CD4-positive, alpha-beta T cell (primary cell): ENCODE measurements at regions of chr9 and their contacts with region 1.

Region 1: GRCh38 chr9:94672811-94673487 is 33.6 kb upstream of the FBP1 start:
- DNase-seq: no peak
- ATAC-seq: no peak
- H3K4me3 ChIP-seq: no peak overlapping the region
- H3K4me3 Mint-ChIP-seq: no peak overlapping the region
- H3K27ac ChIP-seq: no peak overlapping the region
- H3K27ac Mint-ChIP-seq: no peak overlapping the region
- H3K4me1 ChIP-seq: no peaks in the 10 kb centered on the region
- H3K4me1 Mint-ChIP-seq: no peaks in the 10 kb centered on the region
- H3K27me3 ChIP-seq: no peaks in the 10 kb centered on the region
- H3K27me3 Mint-ChIP-seq: peaks cover 7% of the 10 kb centered on the region
- CTCF ChIP-seq: no peak

Region 2: GRCh38 chr9:94639061-94639998 is 33.6 kb before region 1 on chr9 and contains the start of gene FBP1:
- CTCF ChIA-PET with region 1: no interaction called
- POLR2A ChIA-PET with region 1: interaction called, 17 read pairs
- intact Hi-C with region 1: no loop called
- DNase-seq: peak in 13 of 14 experiments; percentile 13 to 60 (median 35)
- ATAC-seq: peak; percentile 62
- H3K4me3 ChIP-seq: peak within 1 kb of the TSS; percentile 72
- H3K4me3 Mint-ChIP-seq: peak within 1 kb of the TSS; percentile 91
- H3K27ac ChIP-seq: peak within 1 kb of the TSS in 1 of 2 donors; percentile 22
- H3K27ac Mint-ChIP-seq: peak within 1 kb of the TSS; percentile 70
- H3K4me1 ChIP-seq: peaks cover 15% of the 10 kb centered on the region
- H3K4me1 Mint-ChIP-seq: peaks cover 17% of the 10 kb centered on the region
- H3K27me3 ChIP-seq: no peaks in the 10 kb centered on the region
- H3K27me3 Mint-ChIP-seq: no peaks in the 10 kb centered on the region
- CTCF ChIP-seq: no peak
- total RNA-seq, gene FBP1: 3.0 to 3.6 TPM

Region 3: GRCh38 chr9:94656200-94656599 is 16.7 kb before region 1 on chr9:
- CTCF ChIA-PET with region 1: interaction called, 5 read pairs
- POLR2A ChIA-PET with region 1: interaction called, 37 read pairs
- intact Hi-C with region 1: no loop called
- DNase-seq: peak in 10 of 14 experiments; percentile 5 to 73 (median 34)
- ATAC-seq: peak; percentile 98
- H3K4me3 ChIP-seq: peak overlapping the region; percentile 46
- H3K4me3 Mint-ChIP-seq: peak overlapping the region; percentile 52
- H3K27ac ChIP-seq: no peak overlapping the region
- H3K27ac Mint-ChIP-seq: peak overlapping the region; percentile 57
- H3K4me1 ChIP-seq: peaks cover 24% of the 10 kb centered on the region
- H3K4me1 Mint-ChIP-seq: peaks cover 15% of the 10 kb centered on the region
- H3K27me3 ChIP-seq: no peaks in the 10 kb centered on the region
- H3K27me3 Mint-ChIP-seq: no peaks in the 10 kb centered on the region
- CTCF ChIP-seq: no peak

Region 4: GRCh38 chr9:95127249-95128176 is 454.6 kb after region 1 on chr9:
- CTCF ChIA-PET with region 1: interaction called, 9 read pairs
- POLR2A ChIA-PET with region 1: interaction called, 3 read pairs
- intact Hi-C with region 1: loop called in 1 of 2 experiments (anchors 5 kb)
- DNase-seq: peak; percentile 41 to 79 (median 64)
- ATAC-seq: peak; percentile 91
- H3K4me3 ChIP-seq: no peak overlapping the region
- H3K4me3 Mint-ChIP-seq: no peak overlapping the region
- H3K27ac ChIP-seq: no peak overlapping the region
- H3K27ac Mint-ChIP-seq: no peak overlapping the region
- H3K4me1 ChIP-seq: peaks cover 8% of the 10 kb centered on the region
- H3K4me1 Mint-ChIP-seq: peaks cover 5% of the 10 kb centered on the region
- H3K27me3 ChIP-seq: no peaks in the 10 kb centered on the region
- H3K27me3 Mint-ChIP-seq: no peaks in the 10 kb centered on the region
- CTCF ChIP-seq: peak; percentile 93